Activated CD4-positive, alpha-beta T cell treated with anti-CD3 and anti-CD28 coated beads, Interleukin-2, amount 10 ng/mL, durations not matched to agents 7 days and 5 days (primary cell): ENCODE measurements at regions of chr17 and their contacts with region 1.

Region 1: GRCh38 chr17:64129764-64130558 is at the start of gene ERN1:
- DNase-seq: peak; percentile 89
- H3K4me3 Mint-ChIP-seq: peak within 1 kb of the TSS; percentile 92
- H3K27ac Mint-ChIP-seq: peak within 1 kb of the TSS; percentile 92
- H3K4me1 Mint-ChIP-seq: peaks cover 53% of the 10 kb centered on the region
- H3K27me3 Mint-ChIP-seq: no peaks in the 10 kb centered on the region
- total RNA-seq, gene ERN1: 50.1 to 57.5 TPM

Region 2: DNA sequence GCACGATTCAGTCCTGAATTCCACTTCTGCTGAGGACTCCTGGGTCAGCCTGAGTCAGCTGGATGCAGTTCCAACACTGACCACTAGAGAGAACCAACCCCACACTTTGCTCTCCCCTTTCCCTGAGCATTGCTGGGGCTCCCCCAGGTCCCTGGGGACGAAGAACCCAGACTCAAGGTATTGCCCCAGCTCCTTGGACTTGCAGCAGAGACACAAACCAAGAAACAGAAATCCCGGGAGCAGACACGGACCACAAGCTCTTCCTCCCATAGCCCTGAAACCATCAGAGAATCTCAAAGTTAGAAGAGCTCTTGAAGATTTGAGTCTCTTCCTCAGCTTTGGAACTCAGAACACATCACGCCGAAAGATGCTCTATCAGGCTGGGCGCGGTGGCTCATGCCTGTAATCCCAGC is 210.6 kb before region 1 on chr17:
- CTCF ChIA-PET with region 1: interaction called, 14 read pairs
- POLR2A ChIA-PET with region 1: no interaction called
- DNase-seq: peak; percentile 83
- H3K4me3 Mint-ChIP-seq: no peak overlapping the region
- H3K27ac Mint-ChIP-seq: no peak overlapping the region
- H3K4me1 Mint-ChIP-seq: peaks cover 7% of the 10 kb centered on the region
- H3K27me3 Mint-ChIP-seq: peaks cover 4% of the 10 kb centered on the region

Region 3: GRCh38 chr17:64020056-64020766 is 109.8 kb before region 1 on chr17 and contains the start of gene ICAM2:
- CTCF ChIA-PET with region 1: interaction called, 225 read pairs
- POLR2A ChIA-PET with region 1: no interaction called
- DNase-seq: peak; percentile 96
- H3K4me3 Mint-ChIP-seq: peak within 1 kb of the TSS; percentile 96
- H3K27ac Mint-ChIP-seq: peak within 1 kb of the TSS; percentile 100
- H3K4me1 Mint-ChIP-seq: peaks cover 74% of the 10 kb centered on the region
- H3K27me3 Mint-ChIP-seq: no peaks in the 10 kb centered on the region
- total RNA-seq, gene ICAM2: 113 to 116 TPM

Region 4: DNA sequence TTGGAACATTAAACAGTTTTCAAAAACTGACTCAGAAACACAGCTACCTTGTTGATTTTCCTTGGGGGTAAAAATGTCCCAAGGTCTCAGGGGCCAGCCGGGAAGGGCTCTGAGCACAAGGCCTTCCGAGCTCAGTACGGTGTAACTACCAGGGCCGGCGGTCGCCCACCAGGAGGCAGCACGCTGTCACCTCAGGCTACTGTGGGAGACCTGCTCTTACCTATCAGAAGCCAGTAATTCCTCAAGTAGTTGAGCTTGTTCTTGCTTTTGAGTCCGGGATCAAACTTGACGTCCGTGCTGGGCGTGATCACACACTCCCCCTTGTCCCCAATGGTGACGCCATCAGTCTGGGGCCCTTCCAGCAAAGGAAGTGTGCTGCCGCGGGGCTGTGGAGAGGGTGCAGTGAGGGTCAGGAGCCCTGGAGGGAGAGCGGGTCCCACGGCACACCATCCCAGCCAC is 66.2 kb before region 1 on chr17:
- CTCF ChIA-PET with region 1: interaction called, 21 read pairs
- POLR2A ChIA-PET with region 1: interaction called, 3 read pairs
- DNase-seq: peak; percentile 62
- H3K4me3 Mint-ChIP-seq: peak overlapping the region; percentile 8
- H3K27ac Mint-ChIP-seq: peak overlapping the region; percentile 78
- H3K4me1 Mint-ChIP-seq: peaks cover 81% of the 10 kb centered on the region
- H3K27me3 Mint-ChIP-seq: no peaks in the 10 kb centered on the region

Region 5: DNA sequence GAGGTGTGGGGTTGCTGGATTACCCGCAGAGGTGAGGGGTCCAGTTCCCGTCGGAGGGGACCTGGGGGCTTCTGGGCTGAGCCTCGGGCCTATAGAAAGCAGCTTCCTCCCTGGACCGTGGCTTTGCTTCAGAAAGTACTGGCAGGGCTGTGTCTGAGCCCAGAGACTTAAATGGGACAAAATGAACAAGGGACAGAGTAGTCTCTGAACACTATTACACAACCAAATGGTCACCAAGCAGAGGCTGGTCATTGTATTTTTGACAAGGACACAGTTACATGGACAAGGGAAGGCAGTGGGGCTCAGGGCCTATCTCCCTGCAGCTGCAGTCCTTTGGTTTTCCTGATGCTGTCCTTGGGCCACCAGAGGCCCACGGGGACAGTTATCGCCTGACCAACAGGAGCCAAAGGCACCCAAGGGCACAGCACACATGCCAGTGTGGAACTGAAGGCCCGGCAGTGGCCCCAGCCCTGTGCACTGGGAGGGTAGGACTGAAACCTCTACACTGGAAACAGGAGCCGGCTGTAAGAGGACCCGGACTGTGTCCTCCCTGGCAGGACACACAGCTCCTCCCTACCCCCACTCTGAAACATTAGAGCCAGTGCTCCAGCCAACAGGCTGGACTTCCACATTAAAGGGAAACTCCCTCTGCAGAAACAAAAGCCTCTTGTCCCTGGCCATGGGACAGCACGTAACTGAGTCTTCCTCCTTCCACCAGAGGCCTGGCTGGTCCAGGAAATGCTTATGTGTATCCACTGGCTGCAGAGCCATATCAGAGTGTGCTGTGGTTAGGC is 26.0 kb after region 1 on chr17:
- CTCF ChIA-PET with region 1: no interaction called
- POLR2A ChIA-PET with region 1: no interaction called
- DNase-seq: no peak
- H3K4me3 Mint-ChIP-seq: no peak overlapping the region
- H3K27ac Mint-ChIP-seq: no peak overlapping the region
- H3K4me1 Mint-ChIP-seq: no peaks in the 10 kb centered on the region
- H3K27me3 Mint-ChIP-seq: no peaks in the 10 kb centered on the region

Region 6: GRCh38 chr17:64230795-64231408 is 100.9 kb after region 1 on chr17:
- CTCF ChIA-PET with region 1: no interaction called
- POLR2A ChIA-PET with region 1: no interaction called
- DNase-seq: no peak
- H3K4me3 Mint-ChIP-seq: no peak overlapping the region
- H3K27ac Mint-ChIP-seq: no peak overlapping the region
- H3K4me1 Mint-ChIP-seq: no peaks in the 10 kb centered on the region
- H3K27me3 Mint-ChIP-seq: no peaks in the 10 kb centered on the region